ENCODE measurements at regions of chr5 and their contacts with region 1.

Region 1: GRCh38 chr5:37837414-37838032 is 2.3 kb downstream of the GDNF start:
- DNase-seq: peak; percentile 51
- H3K4me3 ChIP-seq: peak overlapping the region; percentile 33 to 38
- H3K27ac ChIP-seq: peak overlapping the region; percentile 40 to 42
- H3K4me1 ChIP-seq: no peaks in the 10 kb centered on the region
- H3K27me3 ChIP-seq: peaks cover 7% of the 10 kb centered on the region
- CTCF ChIP-seq: peak; percentile 52 to 81 (median 74)
- POLR2A ChIP-seq: no peak

Region 2: GRCh38 chr5:37412515-37413277 is 424.8 kb before region 1 on chr5:
- intact Hi-C with region 1: loop called (anchors 10 kb)
- DNase-seq: peak; percentile 24
- H3K4me3 ChIP-seq: no peak overlapping the region
- H3K27ac ChIP-seq: no peak overlapping the region
- H3K4me1 ChIP-seq: no peaks in the 10 kb centered on the region
- H3K27me3 ChIP-seq: no peaks in the 10 kb centered on the region
- CTCF ChIP-seq: peak; percentile 57 to 87 (median 72)
- POLR2A ChIP-seq: no peak

Region 3: GRCh38 chr5:37889612-37890317 is 52.2 kb after region 1 on chr5:
- intact Hi-C with region 1: no loop called
- DNase-seq: no peak
- H3K4me3 ChIP-seq: no peak overlapping the region
- H3K27ac ChIP-seq: no peak overlapping the region
- H3K4me1 ChIP-seq: no peaks in the 10 kb centered on the region
- H3K27me3 ChIP-seq: no peaks in the 10 kb centered on the region
- CTCF ChIP-seq: no peak
- POLR2A ChIP-seq: no peak

Region 4: DNA sequence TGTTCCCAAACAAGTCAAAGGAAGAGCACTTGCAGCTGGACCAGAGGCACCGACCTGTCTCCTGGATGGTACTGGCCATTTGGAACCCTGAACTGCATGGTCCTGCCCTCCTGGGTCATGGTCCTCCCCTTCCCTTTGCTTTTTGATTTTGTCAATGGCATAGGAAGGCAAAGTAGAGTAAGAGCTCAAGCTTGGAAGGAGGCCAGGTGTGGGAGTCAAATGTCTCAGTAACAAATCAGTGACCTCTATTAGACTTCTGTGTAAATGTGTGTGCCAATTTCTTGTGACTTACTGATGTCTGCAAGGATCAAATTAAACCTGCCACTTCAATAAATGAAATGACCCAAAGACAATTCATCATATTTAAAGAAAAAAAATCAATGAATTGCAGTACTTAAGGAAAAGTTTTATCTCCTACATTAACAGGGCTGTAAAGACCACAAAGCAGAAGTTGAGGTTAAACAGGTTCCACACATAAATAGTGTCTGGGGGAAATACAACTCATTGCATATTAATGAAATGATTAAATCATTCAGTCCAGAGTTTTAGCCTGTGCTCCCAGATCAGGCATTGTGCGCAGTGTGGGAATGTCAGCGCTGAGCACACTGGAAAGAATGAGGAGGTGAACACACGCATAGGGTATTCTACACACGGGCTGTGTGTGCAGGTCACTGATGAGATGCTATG is 1041.0 kb after region 1 on chr5:
- intact Hi-C with region 1: no loop called
- DNase-seq: no peak
- H3K4me3 ChIP-seq: no peak overlapping the region
- H3K27ac ChIP-seq: no peak overlapping the region
- H3K4me1 ChIP-seq: no peaks in the 10 kb centered on the region
- H3K27me3 ChIP-seq: no peaks in the 10 kb centered on the region
- CTCF ChIP-seq: no peak
- POLR2A ChIP-seq: no peak

Measured in prostate gland (tissue), 2 donors.